ENCODE measurements at regions of chr19 and their contacts with region 1.

Region 1: GRCh38 chr19:6372594-6373095 is at the start of gene ALKBH7:
- DNase-seq: peak; percentile 99
- ATAC-seq: peak; percentile 94
- H3K4me3 ChIP-seq: peak within 1 kb of the TSS; percentile 90
- H3K27ac ChIP-seq: peak within 1 kb of the TSS; percentile 88
- H3K4me1 ChIP-seq: peaks cover 2% of the 10 kb centered on the region; the same call in 1 of the 2 replicates
- H3K27me3 ChIP-seq: no peaks in the 10 kb centered on the region
- CTCF ChIP-seq: no peak
- EP300 ChIP-seq: no peak
- POLR2A ChIP-seq: peak; percentile 90
- RAD21 ChIP-seq: no peak
- polyA plus RNA-seq, gene ALKBH7: 0.31 to 5.8 TPM

Region 2: DNA sequence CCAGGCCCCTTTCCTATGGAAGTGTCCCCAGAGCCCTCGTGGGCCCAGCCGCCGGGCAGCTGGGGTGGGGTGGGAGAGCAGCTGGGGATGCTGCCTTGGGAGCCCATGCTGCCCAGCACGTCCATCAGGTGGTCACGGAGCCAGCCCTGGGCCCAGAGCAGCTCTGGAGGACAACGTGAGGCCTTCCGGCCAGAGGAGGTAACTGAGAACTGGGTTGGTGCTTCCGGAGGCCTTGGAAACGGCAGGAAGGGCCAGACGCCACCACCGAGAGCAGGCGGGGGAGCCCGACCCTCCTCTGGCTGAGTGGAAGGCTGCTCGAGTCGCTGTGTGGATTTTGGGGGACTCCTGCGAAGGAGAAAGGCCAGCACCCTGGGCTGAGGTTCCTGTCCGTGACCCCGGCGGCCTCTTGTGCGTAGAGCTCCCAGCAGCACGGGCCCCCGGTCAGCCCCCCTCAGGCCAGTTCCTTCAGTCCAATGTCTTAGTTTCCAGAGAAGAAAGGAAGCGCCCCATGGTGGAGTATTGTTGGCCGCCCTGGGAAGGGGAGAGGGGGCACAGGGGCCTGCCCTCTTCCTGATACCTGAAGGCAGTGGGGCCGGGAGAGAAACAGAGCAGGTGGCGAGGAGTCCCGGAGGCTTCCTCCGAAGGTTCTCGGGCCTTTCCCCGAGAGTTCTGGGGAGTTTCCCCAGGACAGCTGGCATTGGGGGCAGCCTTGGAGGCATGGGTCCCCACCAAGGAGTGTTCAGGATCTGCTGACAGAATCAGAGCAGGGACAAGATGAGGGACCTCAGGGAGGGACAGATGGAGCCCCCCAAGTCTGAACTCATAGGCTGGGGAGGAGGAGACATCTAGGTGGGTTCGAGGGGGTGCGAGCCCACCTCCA is 161.7 kb before region 1 on chr19:
- CTCF ChIA-PET with region 1: no interaction called
- POLR2A ChIA-PET with region 1: no interaction called
- RAD21 ChIA-PET with region 1: no interaction called
- SMC1A ChIA-PET with region 1: no interaction called
- in situ Hi-C with region 1: no loop called
- intact Hi-C with region 1: no loop called
- DNase-seq: no peak
- ATAC-seq: no peak
- H3K4me3 ChIP-seq: no peak overlapping the region
- H3K27ac ChIP-seq: no peak overlapping the region
- H3K4me1 ChIP-seq: no peaks in the 10 kb centered on the region
- H3K27me3 ChIP-seq: no peaks in the 10 kb centered on the region
- CTCF ChIP-seq: no peak
- EP300 ChIP-seq: no peak
- POLR2A ChIP-seq: no peak
- RAD21 ChIP-seq: no peak

Region 3: GRCh38 chr19:6362027-6362350 is 10.7 kb before region 1 on chr19:
- CTCF ChIA-PET with region 1: interaction called, 10 read pairs
- POLR2A ChIA-PET with region 1: interaction called, 30 read pairs
- RAD21 ChIA-PET with region 1: interaction called, 9 read pairs
- SMC1A ChIA-PET with region 1: interaction called, 10 read pairs
- in situ Hi-C with region 1: no loop called
- intact Hi-C with region 1: no loop called
- DNase-seq: no peak
- ATAC-seq: peak; percentile 44
- H3K4me3 ChIP-seq: peak overlapping the region; percentile 99
- H3K27ac ChIP-seq: peak overlapping the region; percentile 76
- H3K4me1 ChIP-seq: no peaks in the 10 kb centered on the region
- H3K27me3 ChIP-seq: no peaks in the 10 kb centered on the region
- CTCF ChIP-seq: no peak
- EP300 ChIP-seq: no peak
- POLR2A ChIP-seq: no peak
- RAD21 ChIP-seq: no peak

Region 4: DNA sequence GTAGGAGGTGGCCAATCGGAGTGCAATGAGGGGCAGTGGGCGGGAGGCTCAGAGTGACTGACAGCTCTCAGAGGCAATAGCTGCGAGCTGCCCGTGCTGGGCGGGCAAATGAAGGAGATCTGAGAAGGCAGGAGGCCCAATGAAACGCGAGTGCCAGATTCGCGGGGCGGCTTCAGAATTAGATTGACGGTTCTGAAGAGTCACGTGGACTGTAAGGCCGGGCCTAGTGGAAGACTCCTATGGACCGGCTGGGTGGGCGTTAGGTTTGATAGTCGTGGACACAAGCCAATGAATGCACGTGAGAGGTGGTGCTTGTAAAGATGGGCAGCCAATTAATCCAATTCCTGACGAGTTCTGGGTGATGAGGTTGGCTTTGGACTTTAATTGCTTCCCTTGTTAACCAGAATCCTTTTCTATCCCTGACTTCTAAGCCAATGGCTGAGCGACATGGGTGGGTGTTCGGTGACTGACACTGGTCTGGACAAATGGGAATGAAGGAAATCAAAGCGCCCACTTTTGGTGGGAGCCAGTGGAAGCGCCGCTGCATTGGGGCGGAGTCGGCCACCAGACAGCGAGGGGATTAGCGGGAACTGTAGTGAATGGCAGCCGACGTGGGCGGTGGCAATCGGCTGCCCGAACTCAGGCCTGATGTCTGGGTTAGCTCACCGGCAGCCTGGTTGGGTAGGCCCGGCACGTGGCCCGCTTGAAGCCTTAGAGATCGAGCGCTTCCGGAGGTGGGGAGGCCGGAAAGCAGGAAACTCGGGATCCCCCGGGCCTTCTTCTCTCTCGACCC is 52.5 kb after region 1 on chr19:
- CTCF ChIA-PET with region 1: interaction called, 8 read pairs
- POLR2A ChIA-PET with region 1: interaction called, 13 read pairs
- RAD21 ChIA-PET with region 1: interaction called, 9 read pairs
- SMC1A ChIA-PET with region 1: interaction called, 3 read pairs
- in situ Hi-C with region 1: no loop called
- intact Hi-C with region 1: no loop called
- DNase-seq: peak; percentile 100
- ATAC-seq: peak; percentile 93
- H3K4me3 ChIP-seq: peak overlapping the region; percentile 6; the same call in 1 of the 2 replicates
- H3K27ac ChIP-seq: peak overlapping the region; percentile 58
- H3K4me1 ChIP-seq: peaks cover 5% of the 10 kb centered on the region
- H3K27me3 ChIP-seq: no peaks in the 10 kb centered on the region
- CTCF ChIP-seq: no peak
- EP300 ChIP-seq: no peak
- POLR2A ChIP-seq: peak; percentile 76
- RAD21 ChIP-seq: no peak

Region 5: DNA sequence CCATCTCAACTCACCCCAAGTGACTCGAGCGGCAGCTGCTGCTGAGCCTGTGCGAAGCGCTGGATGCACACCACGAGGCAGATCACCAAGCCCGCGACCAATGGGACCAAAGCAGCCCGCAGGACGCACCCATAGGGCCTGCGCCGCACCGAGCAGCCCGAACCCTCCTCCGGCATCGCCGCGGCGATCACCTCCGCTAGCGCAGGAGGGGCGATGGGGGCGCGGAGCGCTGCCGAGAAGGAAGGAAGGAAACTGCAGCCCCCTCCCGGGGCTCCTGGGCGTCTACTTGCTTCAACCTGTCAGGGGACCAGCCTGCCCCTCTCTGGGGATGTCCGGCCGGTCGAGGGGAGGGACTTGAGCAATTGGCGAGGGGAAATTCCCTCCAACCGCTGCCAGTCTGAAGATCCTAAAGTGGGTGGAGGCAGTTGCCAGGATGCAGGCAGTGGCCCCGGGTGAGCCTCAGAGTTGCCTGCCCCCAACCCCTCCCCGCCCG is 218.2 kb after region 1 on chr19 and contains the start of gene CD70:
- CTCF ChIA-PET with region 1: no interaction called
- POLR2A ChIA-PET with region 1: no interaction called
- RAD21 ChIA-PET with region 1: no interaction called
- SMC1A ChIA-PET with region 1: no interaction called
- in situ Hi-C with region 1: no loop called
- intact Hi-C with region 1: no loop called
- DNase-seq: peak; percentile 88
- ATAC-seq: peak; percentile 66
- H3K4me3 ChIP-seq: peak within 1 kb of the TSS; percentile 100
- H3K27ac ChIP-seq: peak within 1 kb of the TSS; percentile 93
- H3K4me1 ChIP-seq: peaks cover 34% of the 10 kb centered on the region
- H3K27me3 ChIP-seq: no peaks in the 10 kb centered on the region
- CTCF ChIP-seq: no peak
- EP300 ChIP-seq: peak in 1 of 2 experiments; percentile 57; a peak in 1 of 4 replicates
- POLR2A ChIP-seq: peak; percentile 96
- RAD21 ChIP-seq: 0 out of 2 replicates have a peak, but pooled peaks have one; percentile 1
- polyA plus RNA-seq, gene CD70: 16.4 to 35.8 TPM

Measured in GM12878 (cell line).